ENCODE measurements at regions of chr10 and their contacts with region 1.

Region 1: GRCh38 chr10:4849555-4850242 is 23.7 kb downstream of the AKR1E2 start:
- DNase-seq: peak; percentile 80 to 98
- ATAC-seq: peak; percentile 85
- H3K4me3 ChIP-seq: no peak overlapping the region
- H3K27ac ChIP-seq: peak overlapping the region; percentile 91 to 95
- H3K4me1 ChIP-seq: peaks cover 65% of the 10 kb centered on the region
- CTCF ChIP-seq: peak; percentile 100
- EP300 ChIP-seq: no peak
- POLR2A ChIP-seq: no peak
- RAD21 ChIP-seq: peak; percentile 99 to 100

Region 2: GRCh38 chr10:4825851-4826665 is 23.6 kb before region 1 on chr10 and contains the start of gene AKR1E2:
- CTCF ChIA-PET with region 1: interaction called, 153 read pairs
- POLR2A ChIA-PET with region 1: interaction called, 18 read pairs
- DNase-seq: peak; percentile 98 to 99
- ATAC-seq: peak; percentile 96 to 98
- H3K4me3 ChIP-seq: peak within 1 kb of the TSS; percentile 77
- H3K27ac ChIP-seq: peak within 1 kb of the TSS; percentile 93 to 96
- H3K4me1 ChIP-seq: peaks cover 33% of the 10 kb centered on the region; the same call in 2 of the 3 replicates
- CTCF ChIP-seq: no peak
- EP300 ChIP-seq: no peak
- POLR2A ChIP-seq: peak; percentile 77
- RAD21 ChIP-seq: no peak
- polyA plus RNA-seq, gene AKR1E2: 17.5 and 20.0 TPM in 2 replicates

Region 3: DNA sequence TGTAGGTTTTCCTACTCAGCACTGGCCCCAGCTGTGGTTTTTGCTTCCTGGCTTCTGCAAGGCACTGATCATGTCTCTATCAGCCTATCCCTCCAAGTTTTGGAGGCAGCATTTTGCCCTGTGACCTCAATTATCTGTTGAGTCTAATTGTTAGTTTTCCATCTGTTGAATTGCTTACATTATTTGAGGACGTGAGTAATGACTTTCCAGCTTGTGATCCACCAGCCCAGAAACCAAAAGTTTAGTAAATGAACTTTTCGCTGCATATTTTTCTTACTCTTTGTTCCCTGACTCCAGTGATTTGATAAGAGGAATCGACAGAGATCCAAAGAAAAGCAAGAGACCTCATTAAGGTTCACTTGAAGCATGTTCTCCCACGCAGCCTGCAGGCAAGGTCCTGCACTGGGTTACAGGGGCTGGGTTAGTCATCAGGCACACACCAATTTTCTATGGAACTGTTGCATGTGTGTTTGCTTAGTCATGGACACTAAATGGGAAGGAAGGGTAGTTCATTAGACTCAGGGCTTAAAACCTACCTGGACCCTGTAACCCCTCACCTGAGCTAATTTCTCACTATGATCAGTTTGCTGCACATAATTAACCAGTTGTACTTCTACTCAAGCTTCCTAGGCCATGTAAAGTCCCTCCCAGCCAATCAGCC is 33.5 kb after region 1 on chr10:
- CTCF ChIA-PET with region 1: interaction called, 28 read pairs
- POLR2A ChIA-PET with region 1: no interaction called
- DNase-seq: peak in 1 of 2 experiments; percentile 26
- ATAC-seq: peak in 1 of 2 experiments; percentile 49; a peak in 2 of 6 replicates
- H3K4me3 ChIP-seq: no peak overlapping the region
- H3K27ac ChIP-seq: peak overlapping the region in 1 of 2 experiments; percentile 27; a peak in 1 of 6 replicates
- H3K4me1 ChIP-seq: peaks cover 9% of the 10 kb centered on the region; the same call in 1 of the 3 replicates
- CTCF ChIP-seq: no peak
- EP300 ChIP-seq: no peak
- POLR2A ChIP-seq: no peak
- RAD21 ChIP-seq: no peak

Region 4: DNA sequence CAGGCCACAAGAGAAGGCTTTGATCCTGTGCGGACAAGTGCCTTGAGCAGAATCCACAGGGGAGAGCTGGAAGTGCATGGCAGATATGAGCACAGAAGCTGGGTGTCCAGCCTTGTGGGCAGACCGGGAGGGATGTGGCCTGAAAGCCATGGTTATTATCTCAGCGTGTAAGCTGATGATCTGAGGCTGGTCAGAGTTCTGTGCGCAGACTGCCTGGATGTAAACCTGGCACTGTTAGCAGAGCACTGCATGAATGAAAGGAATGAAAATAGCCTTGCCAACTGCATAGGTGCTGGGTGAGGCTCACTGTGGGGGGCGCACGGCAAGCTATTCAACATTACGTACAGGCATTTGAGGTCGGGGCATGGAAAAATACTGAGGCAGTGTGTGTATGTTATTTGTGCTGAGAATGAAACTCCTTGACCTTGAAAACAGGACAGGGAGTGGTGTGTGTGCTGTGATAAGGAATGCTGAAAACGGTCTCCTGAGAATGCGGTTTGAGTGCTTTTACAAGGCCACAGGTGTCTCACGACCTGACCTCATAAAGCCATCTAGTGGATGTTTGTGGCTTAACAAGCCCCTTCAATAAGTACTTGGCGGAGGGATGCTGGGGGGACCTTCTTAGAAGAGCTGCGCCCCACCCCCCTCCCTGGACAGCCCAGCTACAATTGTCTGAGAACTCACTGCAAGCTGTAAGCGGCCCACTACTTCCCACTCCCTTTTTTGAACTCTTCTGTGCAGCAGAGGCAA is 132.2 kb after region 1 on chr10:
- CTCF ChIA-PET with region 1: interaction called, 148 read pairs
- POLR2A ChIA-PET with region 1: interaction called, 55 read pairs
- DNase-seq: peak in 1 of 2 experiments; percentile 94
- ATAC-seq: peak; percentile 1 to 7
- H3K4me3 ChIP-seq: no peak overlapping the region
- H3K27ac ChIP-seq: peak overlapping the region; percentile 81 to 93
- H3K4me1 ChIP-seq: peaks cover 81% of the 10 kb centered on the region
- CTCF ChIP-seq: peak; percentile 51
- EP300 ChIP-seq: peak in 1 of 2 experiments; percentile 42; a peak in 1 of 5 replicates
- POLR2A ChIP-seq: no peak
- RAD21 ChIP-seq: peak; percentile 70 to 72

Region 5: GRCh38 chr10:5283305-5284158 is 433.8 kb after region 1 on chr10:
- CTCF ChIA-PET with region 1: interaction called, 68 read pairs
- POLR2A ChIA-PET with region 1: interaction called, 3 read pairs
- DNase-seq: peak; percentile 60 to 93
- ATAC-seq: peak; percentile 91 to 92
- H3K4me3 ChIP-seq: peak overlapping the region; percentile 1; the same call in 1 of the 3 replicates
- H3K27ac ChIP-seq: peak overlapping the region; percentile 96 to 97
- H3K4me1 ChIP-seq: peaks cover 41% of the 10 kb centered on the region
- CTCF ChIP-seq: peak; percentile 86
- EP300 ChIP-seq: 0 out of 5 replicates have a peak, but pooled peaks of 1 of the 2 experiments have one; percentile 27
- POLR2A ChIP-seq: no peak
- RAD21 ChIP-seq: peak; percentile 92 to 93

Region 6: DNA sequence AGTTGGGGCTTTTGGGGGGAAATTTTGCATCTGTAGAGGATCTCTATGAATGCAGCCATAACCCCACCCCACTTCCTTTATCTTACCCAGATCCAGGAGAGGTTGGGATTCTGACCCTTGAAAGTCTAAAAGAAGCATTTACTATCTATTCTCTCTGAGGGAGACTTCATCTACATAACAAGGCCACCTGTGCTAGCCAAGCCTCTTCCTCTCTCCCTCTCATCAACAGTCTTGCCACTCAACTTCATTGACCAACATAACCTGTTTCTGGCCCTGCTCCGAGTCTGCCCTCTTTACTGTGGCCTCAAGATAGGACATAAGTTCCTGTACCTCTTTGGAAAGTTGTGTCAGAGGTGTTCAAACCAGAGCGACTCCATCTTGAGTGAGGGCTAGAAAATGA is 535.5 kb after region 1 on chr10:
- CTCF ChIA-PET with region 1: interaction called, 13 read pairs
- POLR2A ChIA-PET with region 1: no interaction called
- DNase-seq: no peak
- ATAC-seq: no peak
- H3K4me3 ChIP-seq: no peak overlapping the region
- H3K27ac ChIP-seq: peak overlapping the region; percentile 7 to 67; a peak in 2 of 6 replicates
- H3K4me1 ChIP-seq: peaks cover 10% of the 10 kb centered on the region
- CTCF ChIP-seq: no peak
- EP300 ChIP-seq: no peak
- POLR2A ChIP-seq: no peak
- RAD21 ChIP-seq: no peak

Region 7: DNA sequence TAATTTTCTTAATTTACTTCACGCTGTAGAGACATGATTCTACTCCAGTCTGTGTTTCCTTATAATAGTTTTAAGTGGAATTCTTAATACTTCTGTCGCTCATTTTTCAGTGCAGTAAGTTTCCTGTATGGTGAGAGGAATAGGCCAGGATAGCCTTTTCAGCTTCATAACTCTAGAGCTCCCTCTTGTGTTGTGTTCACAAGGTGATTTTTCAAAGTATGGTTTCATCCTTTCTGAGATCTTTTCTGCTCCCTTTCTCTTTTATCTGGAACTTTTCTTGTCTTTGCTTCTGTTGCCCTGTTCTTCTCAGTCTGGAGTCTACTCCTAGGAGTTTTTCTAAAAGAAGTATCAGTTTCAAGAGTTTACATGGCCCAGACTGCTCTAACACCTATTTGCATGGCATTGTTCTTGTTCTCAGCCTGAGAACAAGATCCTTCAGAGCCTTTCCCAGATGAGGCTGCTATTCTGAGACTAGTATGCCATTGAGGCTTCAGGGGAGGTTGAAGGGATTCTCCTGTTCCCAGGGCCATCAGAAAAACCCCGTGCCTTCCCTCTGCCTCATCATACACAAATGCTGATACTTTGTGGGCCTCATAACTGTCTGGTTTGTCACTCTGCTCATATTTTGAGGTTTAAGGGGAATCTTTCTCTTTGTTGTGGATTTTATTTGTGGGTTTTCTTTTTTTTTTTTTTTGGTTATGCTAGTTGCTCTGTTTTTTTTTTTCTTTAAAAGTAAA is 584.5 kb after region 1 on chr10:
- CTCF ChIA-PET with region 1: interaction called, 65 read pairs
- POLR2A ChIA-PET with region 1: no interaction called
- DNase-seq: peak; percentile 40 to 73
- ATAC-seq: peak; percentile 94
- H3K4me3 ChIP-seq: no peak overlapping the region
- H3K27ac ChIP-seq: peak overlapping the region; percentile 75 to 78
- H3K4me1 ChIP-seq: peaks cover 26% of the 10 kb centered on the region
- CTCF ChIP-seq: peak; percentile 96
- EP300 ChIP-seq: no peak
- POLR2A ChIP-seq: no peak
- RAD21 ChIP-seq: peak; percentile 88 to 93